IMR-90 (cell line): ENCODE measurements at regions of chr2 and their contacts with region 1.

Region 1: GRCh38 chr2:19377717-19378116 is 19.3 kb upstream of the OSR1 start:
- DNase-seq: no peak
- ATAC-seq: no peak
- H3K4me3 ChIP-seq: no peak overlapping the region
- H3K27ac ChIP-seq: no peak overlapping the region
- H3K4me1 ChIP-seq: no peaks in the 10 kb centered on the region
- H3K27me3 ChIP-seq: peaks cover 28% of the 10 kb centered on the region
- CTCF ChIP-seq: 0 out of 2 replicates have a peak, but pooled peaks have one; percentile 9
- POLR2A ChIP-seq: no peak
- RAD21 ChIP-seq: peak; percentile 33

Region 2: GRCh38 chr2:19673213-19673791 is 295.6 kb after region 1 on chr2:
- CTCF ChIA-PET with region 1: no interaction called
- POLR2A ChIA-PET with region 1: no interaction called
- dilution Hi-C with region 1: no loop called
- in situ Hi-C with region 1: loop called (anchors 10 kb)
- intact Hi-C with region 1: no loop called
- DNase-seq: peak; percentile 19
- ATAC-seq: peak; percentile 49; the same call in 1 of the 2 replicates
- H3K4me3 ChIP-seq: no peak overlapping the region
- H3K27ac ChIP-seq: no peak overlapping the region
- H3K4me1 ChIP-seq: no peaks in the 10 kb centered on the region
- H3K27me3 ChIP-seq: peaks cover 5% of the 10 kb centered on the region
- CTCF ChIP-seq: no peak
- POLR2A ChIP-seq: no peak
- RAD21 ChIP-seq: no peak